Breast epithelium (tissue), 4 donors: ENCODE measurements at regions of chr3 and their contacts with region 1.

Region 1: GRCh38 chr3:8978551-8978950 is 15.3 kb upstream of the RAD18 start:
- DNase-seq: no peak
- H3K4me3 ChIP-seq: no peak overlapping the region
- H3K27ac ChIP-seq: no peak overlapping the region
- H3K4me1 ChIP-seq: no peaks in the 10 kb centered on the region
- H3K27me3 ChIP-seq: peaks cover 0 to 6% of the 10 kb centered on the region in 2 donors
- CTCF ChIP-seq: no peak
- POLR2A ChIP-seq: no peak

Region 2: GRCh38 chr3:8997151-8997550 is 18.6 kb after region 1 on chr3:
- intact Hi-C with region 1: loop called (anchors 1 kb)
- DNase-seq: no peak
- H3K4me3 ChIP-seq: no peak overlapping the region
- H3K27ac ChIP-seq: peak overlapping the region in 1 of 2 donors; percentile 35
- H3K4me1 ChIP-seq: no peaks in the 10 kb centered on the region
- H3K27me3 ChIP-seq: no peaks in the 10 kb centered on the region
- CTCF ChIP-seq: no peak
- POLR2A ChIP-seq: no peak